HAP-1 (cell line): ENCODE measurements at regions of chr11 and their contacts with region 1.

Region 1: GRCh38 chr11:125625630-125626287 is 796 bp downstream of the CHEK1 start:
- DNase-seq: peak; percentile 92 to 95
- H3K4me3 ChIP-seq: peak overlapping the region; percentile 51
- H3K4me1 ChIP-seq: peaks cover 15% of the 10 kb centered on the region
- H3K27me3 ChIP-seq: no peaks in the 10 kb centered on the region

Region 2: DNA sequence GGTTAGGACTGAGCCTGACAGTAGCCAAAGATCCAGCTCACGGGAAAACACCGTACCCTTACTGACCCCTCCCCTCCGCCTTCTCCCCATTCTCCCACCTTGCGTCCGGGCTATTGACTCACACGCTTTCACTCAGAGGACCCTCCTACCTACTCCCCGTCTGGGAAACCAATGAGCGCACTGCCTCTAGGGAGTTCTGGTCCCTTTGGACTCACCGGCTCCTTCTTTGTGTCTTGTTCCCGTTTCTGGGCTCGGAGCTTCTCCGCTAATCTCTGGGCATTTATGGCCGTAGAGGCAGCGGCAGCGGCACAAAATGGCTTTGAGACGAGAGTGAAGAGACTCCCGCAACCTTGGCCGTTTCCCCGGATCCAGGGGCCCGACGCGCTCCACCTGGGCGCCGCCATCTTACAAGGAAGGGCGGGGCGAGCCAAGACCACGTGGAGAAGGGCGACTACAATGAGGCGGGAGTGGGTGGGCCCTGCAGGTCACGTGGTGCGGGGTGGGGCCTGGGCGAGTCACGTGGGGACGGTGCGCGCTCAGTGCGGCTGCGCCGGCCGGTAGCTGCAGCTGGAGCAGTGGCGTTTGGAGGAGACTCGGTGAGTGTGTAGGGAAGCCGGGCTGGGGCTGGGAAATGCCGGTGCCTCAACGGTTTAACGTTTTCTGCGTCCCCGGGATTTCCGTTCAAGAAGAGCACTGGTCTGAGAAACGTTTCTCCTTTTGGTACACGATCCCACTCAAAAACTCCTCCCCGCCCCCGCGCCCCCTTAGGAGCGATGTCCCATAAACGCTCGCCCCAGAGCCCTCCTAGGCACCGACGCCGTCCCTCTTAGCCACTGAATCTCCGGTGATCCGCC is 585.7 kb after region 1 on chr11 and contains the starts of genes FAM118B and RPUSD4:
- in situ Hi-C with region 1: loop called (anchors 25 kb)
- DNase-seq: peak; percentile 90 to 98
- H3K4me3 ChIP-seq: peak within 1 kb of the TSS; percentile 100
- H3K4me1 ChIP-seq: peaks cover 9% of the 10 kb centered on the region; the same call in 1 of the 2 replicates
- H3K27me3 ChIP-seq: no peaks in the 10 kb centered on the region